CD14-positive monocyte (primary cell): ENCODE measurements at regions of chr1 and their contacts with region 1.

Region 1: GRCh38 chr1:22641906-22642636 is 1.4 kb upstream of the C1QC start:
- DNase-seq: peak; percentile 25 to 45 (median 36)
- H3K4me3 ChIP-seq: no peak overlapping the region
- H3K4me3 Mint-ChIP-seq: no peak overlapping the region
- H3K27ac ChIP-seq: no peak overlapping the region
- H3K27ac Mint-ChIP-seq: no peak overlapping the region
- H3K4me1 ChIP-seq: peaks cover 0 to under 1% of the 10 kb centered on the region in 2 donors
- H3K4me1 Mint-ChIP-seq: peaks cover 10% of the 10 kb centered on the region
- H3K27me3 ChIP-seq: no peaks in the 10 kb centered on the region
- H3K27me3 Mint-ChIP-seq: peaks cover 6 to 13% (median 7%) of the 10 kb centered on the region in 3 donors
- CTCF ChIP-seq: peak; percentile 85

Region 2: GRCh38 chr1:22121411-22121911 is 520.6 kb before region 1 on chr1:
- intact Hi-C with region 1: loop called in 1 of 2 experiments (anchors 10 kb)
- DNase-seq: no peak
- H3K4me3 ChIP-seq: no peak overlapping the region
- H3K4me3 Mint-ChIP-seq: no peak overlapping the region
- H3K27ac ChIP-seq: no peak overlapping the region
- H3K27ac Mint-ChIP-seq: peak overlapping the region in 1 of 7 donors; percentile 10
- H3K4me1 ChIP-seq: no peaks in the 10 kb centered on the region
- H3K4me1 Mint-ChIP-seq: peaks cover 1% of the 10 kb centered on the region
- H3K27me3 ChIP-seq: no peaks in the 10 kb centered on the region
- H3K27me3 Mint-ChIP-seq: peaks cover 0 to 2% (median 1%) of the 10 kb centered on the region in 3 donors
- CTCF ChIP-seq: no peak

Region 3: GRCh38 chr1:22131875-22132486 is 510.1 kb before region 1 on chr1:
- intact Hi-C with region 1: loop called (anchors 5 to 10 kb)
- DNase-seq: peak; percentile 5 to 44 (median 11)
- H3K4me3 ChIP-seq: no peak overlapping the region
- H3K4me3 Mint-ChIP-seq: no peak overlapping the region
- H3K27ac ChIP-seq: no peak overlapping the region
- H3K27ac Mint-ChIP-seq: no peak overlapping the region
- H3K4me1 ChIP-seq: peaks cover 0 to 2% of the 10 kb centered on the region in 2 donors
- H3K4me1 Mint-ChIP-seq: peaks cover 12% of the 10 kb centered on the region
- H3K27me3 ChIP-seq: peaks cover 0 to 9% of the 10 kb centered on the region in 2 donors
- H3K27me3 Mint-ChIP-seq: peaks cover 8 to 18% (median 9%) of the 10 kb centered on the region in 3 donors
- CTCF ChIP-seq: peak; percentile 93

Region 4: DNA sequence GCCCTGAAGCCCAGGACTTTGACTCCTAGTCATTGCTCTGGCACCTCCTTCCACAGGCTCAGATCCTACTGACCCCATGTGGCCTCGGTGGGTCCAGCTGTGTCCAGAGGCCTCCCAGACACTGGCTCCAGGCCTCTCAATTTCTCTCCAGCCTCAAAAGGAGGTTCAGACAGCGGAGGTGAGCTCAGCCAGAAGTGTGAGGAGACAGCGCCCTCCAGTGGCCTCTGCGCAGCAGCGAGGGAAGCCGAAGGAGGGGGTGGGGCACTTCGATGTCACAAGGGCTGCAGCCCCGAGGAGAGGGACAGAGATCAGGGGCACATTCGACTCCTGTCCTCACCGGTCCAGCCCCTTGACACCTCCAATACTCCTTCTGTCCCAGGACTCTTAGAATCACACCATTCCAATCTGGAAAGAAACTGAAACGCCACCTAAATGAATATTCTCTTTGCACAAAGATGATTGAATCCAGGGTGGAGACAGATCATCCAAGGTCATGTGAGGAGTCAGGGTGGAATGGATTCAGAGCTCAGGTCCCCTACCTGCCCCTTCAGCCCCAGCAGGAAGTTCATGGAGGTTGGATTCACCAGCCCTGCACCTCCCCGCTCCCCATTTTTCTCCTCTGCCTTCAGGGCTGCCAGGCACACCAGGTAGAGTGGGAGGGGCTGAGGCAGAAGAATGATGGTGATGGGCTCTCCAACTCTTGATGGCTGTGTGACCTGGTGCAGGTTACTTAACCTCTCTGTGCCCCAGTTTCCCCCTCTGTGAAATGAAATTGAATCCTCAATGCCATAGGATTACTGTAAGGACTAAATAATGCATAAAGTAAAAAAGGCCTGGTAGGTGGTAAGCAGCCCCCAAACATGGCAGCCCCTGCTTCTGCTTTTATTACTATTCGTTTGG is 225.3 kb before region 1 on chr1:
- intact Hi-C with region 1: loop called (anchors 1 to 5 kb)
- DNase-seq: peak in 2 of 3 donors; percentile 2 to 29
- H3K4me3 ChIP-seq: no peak overlapping the region
- H3K4me3 Mint-ChIP-seq: no peak overlapping the region
- H3K27ac ChIP-seq: no peak overlapping the region
- H3K27ac Mint-ChIP-seq: peak overlapping the region in 1 of 7 donors; percentile 50
- H3K4me1 ChIP-seq: no peaks in the 10 kb centered on the region
- H3K4me1 Mint-ChIP-seq: peaks cover 3% of the 10 kb centered on the region
- H3K27me3 ChIP-seq: peaks cover 2 to 9% of the 10 kb centered on the region in 2 donors
- H3K27me3 Mint-ChIP-seq: peaks cover 13 to 25% (median 16%) of the 10 kb centered on the region in 3 donors
- CTCF ChIP-seq: peak; percentile 76

Region 5: DNA sequence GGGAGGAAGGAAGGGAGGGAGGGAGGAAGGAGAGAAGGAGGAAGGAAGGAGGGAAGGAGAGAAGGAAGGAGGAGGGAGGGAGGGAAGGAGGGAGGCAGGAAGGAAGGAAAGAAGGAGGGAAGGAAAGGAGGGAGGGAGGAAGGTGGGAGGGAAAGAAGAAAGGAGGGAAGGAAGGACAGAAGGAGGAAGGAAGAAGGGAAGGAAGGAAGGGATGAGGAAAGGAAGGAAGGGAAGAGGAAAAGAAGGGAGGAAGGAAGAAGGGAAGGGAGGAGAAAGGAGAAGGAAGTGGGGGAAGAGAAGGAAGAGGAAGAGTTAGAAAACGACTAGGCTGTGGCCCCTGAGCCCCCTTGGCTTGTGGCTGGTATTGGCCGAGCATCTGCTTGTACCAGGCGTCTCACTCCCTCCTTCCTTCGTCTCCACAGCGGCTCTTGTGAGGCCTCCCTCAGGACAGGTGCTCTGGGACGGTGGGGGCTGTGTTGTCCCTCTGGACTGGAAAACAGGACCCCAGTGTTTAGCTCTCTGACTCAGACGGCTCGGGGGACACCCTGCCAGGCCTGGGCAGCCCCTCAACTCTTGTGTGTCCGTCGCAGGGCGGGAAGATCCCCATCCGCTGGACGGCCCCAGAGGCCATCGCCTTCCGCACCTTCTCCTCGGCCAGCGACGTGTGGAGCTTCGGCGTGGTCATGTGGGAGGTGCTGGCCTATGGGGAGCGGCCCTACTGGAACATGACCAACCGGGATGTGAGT is 41.8 kb before region 1 on chr1:
- intact Hi-C with region 1: no loop called
- DNase-seq: no peak
- H3K4me3 ChIP-seq: no peak overlapping the region
- H3K4me3 Mint-ChIP-seq: no peak overlapping the region
- H3K27ac ChIP-seq: no peak overlapping the region
- H3K27ac Mint-ChIP-seq: no peak overlapping the region
- H3K4me1 ChIP-seq: no peaks in the 10 kb centered on the region
- H3K4me1 Mint-ChIP-seq: no peaks in the 10 kb centered on the region
- H3K27me3 ChIP-seq: no peaks in the 10 kb centered on the region
- H3K27me3 Mint-ChIP-seq: peaks cover 0 to 8% (median 2%) of the 10 kb centered on the region in 3 donors
- CTCF ChIP-seq: no peak